Breast epithelium (tissue), 4 donors: ENCODE measurements at regions of chr1 and their contacts with region 1.

Region 1: GRCh38 chr1:241202401-241202800 is 154.6 kb downstream of the RGS7 start:
- DNase-seq: no peak
- H3K4me3 ChIP-seq: no peak overlapping the region
- H3K27ac ChIP-seq: no peak overlapping the region
- H3K4me1 ChIP-seq: no peaks in the 10 kb centered on the region
- H3K27me3 ChIP-seq: no peaks in the 10 kb centered on the region
- CTCF ChIP-seq: no peak
- POLR2A ChIP-seq: no peak

Region 2: DNA sequence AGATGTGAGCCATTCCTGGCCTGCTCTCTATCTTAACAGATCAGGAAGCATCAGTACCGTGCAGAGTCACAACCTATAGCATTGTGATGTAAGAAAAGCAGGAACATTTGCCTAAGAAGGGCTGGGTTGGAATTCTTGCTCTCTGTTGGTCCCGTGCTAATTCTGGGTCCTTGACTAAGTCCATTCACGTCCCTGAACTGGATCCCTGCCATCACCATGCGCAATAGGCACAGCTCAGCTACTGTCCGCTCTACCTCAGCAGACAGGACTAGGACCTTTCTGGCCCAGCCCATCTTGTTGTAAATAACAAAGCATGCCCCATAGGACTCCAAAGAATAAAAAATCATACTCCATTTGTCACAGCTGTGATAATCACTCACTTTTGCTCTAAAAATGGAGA is 20.4 kb before region 1 on chr1:
- intact Hi-C with region 1: loop called (anchors 1 kb)
- DNase-seq: no peak
- H3K4me3 ChIP-seq: no peak overlapping the region
- H3K27ac ChIP-seq: no peak overlapping the region
- H3K4me1 ChIP-seq: no peaks in the 10 kb centered on the region
- H3K27me3 ChIP-seq: no peaks in the 10 kb centered on the region
- CTCF ChIP-seq: no peak
- POLR2A ChIP-seq: no peak

Region 3: DNA sequence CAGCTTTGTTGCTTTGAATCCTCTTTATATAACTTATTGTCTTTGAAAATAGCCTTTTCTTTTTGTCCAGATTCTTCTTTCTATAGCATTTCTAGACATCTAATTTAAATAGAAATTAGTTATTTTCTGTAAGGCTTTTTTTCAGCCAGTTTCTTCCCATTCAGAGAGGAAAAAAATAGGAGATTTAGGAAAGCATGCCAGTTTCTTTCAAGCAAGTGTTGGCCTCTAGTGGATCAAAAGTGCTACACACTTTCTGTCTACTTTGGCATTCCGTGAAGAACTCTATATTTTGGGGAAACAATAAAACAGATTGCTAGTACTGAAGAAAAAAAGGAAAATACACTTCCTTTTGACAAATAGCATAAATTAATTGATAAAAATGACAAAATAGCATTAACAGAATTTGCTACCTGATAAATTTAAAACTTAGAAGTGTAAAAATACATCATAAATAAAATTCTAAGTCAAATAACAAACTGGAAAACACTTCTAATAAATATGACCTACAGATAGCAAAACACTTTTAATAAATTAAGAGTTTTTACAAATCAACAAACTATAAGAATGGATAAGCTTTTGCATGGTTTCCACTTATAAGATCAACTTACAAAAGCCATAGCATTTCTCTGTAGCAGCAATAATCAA is 632.5 kb after region 1 on chr1:
- intact Hi-C with region 1: no loop called
- DNase-seq: no peak
- H3K4me3 ChIP-seq: no peak overlapping the region
- H3K27ac ChIP-seq: no peak overlapping the region
- H3K4me1 ChIP-seq: no peaks in the 10 kb centered on the region
- H3K27me3 ChIP-seq: no peaks in the 10 kb centered on the region
- CTCF ChIP-seq: peak; percentile 31 to 60 (median 54)
- POLR2A ChIP-seq: no peak